Activated CD4-positive, alpha-beta T cell treated with anti-CD3 and anti-CD28 coated beads, Interleukin-2, amount 10 ng/mL, durations not matched to agents 7 days and 5 days (primary cell): ENCODE measurements at regions of chr12 and their contacts with region 1.

Region 1: GRCh38 chr12:49018261-49019119 is at the start of gene PRKAG1:
- DNase-seq: peak; percentile 97
- H3K4me3 Mint-ChIP-seq: peak within 1 kb of the TSS; percentile 95
- H3K27ac Mint-ChIP-seq: peak within 1 kb of the TSS; percentile 99
- H3K4me1 Mint-ChIP-seq: peaks cover 43% of the 10 kb centered on the region
- H3K27me3 Mint-ChIP-seq: no peaks in the 10 kb centered on the region
- total RNA-seq, gene PRKAG1: 62.5 to 65.5 TPM

Region 2: DNA sequence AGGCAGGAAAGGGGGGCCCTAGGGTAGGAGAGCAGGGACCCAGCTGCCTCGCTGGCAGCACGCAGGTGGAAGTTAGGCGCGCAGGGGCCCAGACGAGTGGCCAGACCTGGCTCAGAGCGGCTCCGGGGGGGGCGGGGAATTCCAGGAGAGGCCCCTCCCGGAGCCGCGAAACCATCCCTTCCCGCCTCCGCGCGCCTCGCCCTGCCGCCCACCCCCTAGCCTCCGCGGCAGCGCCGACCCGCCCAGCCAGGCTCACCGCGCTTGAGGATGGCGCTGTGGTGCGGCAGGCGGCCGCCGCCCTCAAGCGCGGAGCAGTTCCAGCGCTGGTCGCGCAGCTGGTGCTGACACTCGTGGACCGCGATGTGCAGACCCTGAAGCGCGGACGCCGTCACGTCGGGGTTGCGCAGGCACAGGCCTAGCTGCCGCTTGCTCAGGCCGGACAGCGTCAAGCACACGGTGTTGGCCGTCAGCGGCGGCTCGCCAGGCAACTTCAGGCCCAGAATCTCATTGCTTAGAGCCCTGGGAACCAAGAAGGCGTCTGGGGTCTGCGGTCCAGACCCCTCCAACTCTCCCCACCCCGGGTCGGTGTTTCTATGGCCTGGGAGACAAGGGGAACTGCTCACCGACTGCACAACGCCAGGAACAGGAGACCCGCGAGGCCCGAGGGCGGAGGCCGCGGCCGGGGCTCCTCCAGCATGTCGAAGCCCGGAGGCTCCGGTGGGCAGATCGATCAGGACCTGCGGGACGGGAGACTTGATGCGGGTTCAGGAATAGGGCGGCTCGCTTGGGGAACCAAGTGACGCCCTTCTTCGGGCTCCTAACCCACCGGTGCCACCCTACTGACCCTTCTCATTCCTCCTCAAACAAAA is 48.4 kb before region 1 on chr12:
- CTCF ChIA-PET with region 1: no interaction called
- POLR2A ChIA-PET with region 1: no interaction called
- DNase-seq: no peak
- H3K4me3 Mint-ChIP-seq: no peak overlapping the region
- H3K27ac Mint-ChIP-seq: no peak overlapping the region
- H3K4me1 Mint-ChIP-seq: peaks cover 16% of the 10 kb centered on the region
- H3K27me3 Mint-ChIP-seq: peaks cover 75% of the 10 kb centered on the region

Region 3: DNA sequence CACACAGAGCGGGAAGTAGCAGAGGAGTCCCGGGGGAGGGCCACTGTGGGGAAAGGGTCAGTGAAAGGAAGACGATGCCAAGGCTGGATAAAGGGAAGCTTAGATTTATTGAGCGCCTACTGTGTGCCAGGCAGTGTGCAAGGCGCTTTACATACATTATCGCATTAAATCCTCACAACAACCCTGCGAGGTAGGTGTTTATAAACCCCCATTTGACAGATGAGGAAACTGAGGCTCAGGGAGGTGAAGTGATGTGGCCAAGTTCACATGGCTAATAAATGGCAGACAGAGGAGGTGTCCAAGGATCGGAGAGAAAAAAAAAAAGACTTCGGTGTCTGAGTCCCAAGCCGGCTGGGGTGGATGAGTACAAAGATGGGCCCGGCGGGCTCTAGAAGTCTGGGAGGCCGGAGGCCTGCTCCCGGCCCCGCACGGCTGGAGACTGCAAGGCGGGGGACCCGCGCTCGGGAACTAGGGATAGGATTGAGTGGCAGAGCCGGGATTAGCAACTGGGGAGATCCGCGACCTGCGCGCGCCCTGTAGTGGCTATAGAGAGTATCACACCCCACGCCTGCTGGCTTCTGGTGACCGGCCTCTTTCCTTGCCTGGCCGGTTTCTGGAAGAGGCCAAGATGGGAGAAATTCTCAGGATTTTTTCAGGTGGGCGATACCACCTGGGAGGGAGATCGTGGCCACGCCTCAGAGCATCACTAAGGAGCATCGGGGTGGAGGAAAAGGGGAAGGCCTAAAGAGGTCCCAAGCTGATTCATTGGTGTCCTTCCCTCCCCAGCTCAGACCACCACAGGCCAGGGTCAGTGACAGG is 23.2 kb before region 1 on chr12:
- CTCF ChIA-PET with region 1: interaction called, 36 read pairs
- POLR2A ChIA-PET with region 1: no interaction called
- DNase-seq: peak; percentile 52
- H3K4me3 Mint-ChIP-seq: no peak overlapping the region
- H3K27ac Mint-ChIP-seq: no peak overlapping the region
- H3K4me1 Mint-ChIP-seq: peaks cover 32% of the 10 kb centered on the region
- H3K27me3 Mint-ChIP-seq: peaks cover 66% of the 10 kb centered on the region

Region 4: GRCh38 chr12:49030714-49031552 is 12.4 kb after region 1 on chr12:
- CTCF ChIA-PET with region 1: interaction called, 11 read pairs
- POLR2A ChIA-PET with region 1: no interaction called
- DNase-seq: no peak
- H3K4me3 Mint-ChIP-seq: no peak overlapping the region
- H3K27ac Mint-ChIP-seq: no peak overlapping the region
- H3K4me1 Mint-ChIP-seq: peaks cover 3% of the 10 kb centered on the region
- H3K27me3 Mint-ChIP-seq: no peaks in the 10 kb centered on the region

Region 5: GRCh38 chr12:49043856-49044258 is 25.4 kb after region 1 on chr12:
- CTCF ChIA-PET with region 1: interaction called, 10 read pairs
- POLR2A ChIA-PET with region 1: no interaction called
- DNase-seq: peak; percentile 85
- H3K4me3 Mint-ChIP-seq: no peak overlapping the region
- H3K27ac Mint-ChIP-seq: no peak overlapping the region
- H3K4me1 Mint-ChIP-seq: peaks cover 3% of the 10 kb centered on the region
- H3K27me3 Mint-ChIP-seq: no peaks in the 10 kb centered on the region

Region 6: DNA sequence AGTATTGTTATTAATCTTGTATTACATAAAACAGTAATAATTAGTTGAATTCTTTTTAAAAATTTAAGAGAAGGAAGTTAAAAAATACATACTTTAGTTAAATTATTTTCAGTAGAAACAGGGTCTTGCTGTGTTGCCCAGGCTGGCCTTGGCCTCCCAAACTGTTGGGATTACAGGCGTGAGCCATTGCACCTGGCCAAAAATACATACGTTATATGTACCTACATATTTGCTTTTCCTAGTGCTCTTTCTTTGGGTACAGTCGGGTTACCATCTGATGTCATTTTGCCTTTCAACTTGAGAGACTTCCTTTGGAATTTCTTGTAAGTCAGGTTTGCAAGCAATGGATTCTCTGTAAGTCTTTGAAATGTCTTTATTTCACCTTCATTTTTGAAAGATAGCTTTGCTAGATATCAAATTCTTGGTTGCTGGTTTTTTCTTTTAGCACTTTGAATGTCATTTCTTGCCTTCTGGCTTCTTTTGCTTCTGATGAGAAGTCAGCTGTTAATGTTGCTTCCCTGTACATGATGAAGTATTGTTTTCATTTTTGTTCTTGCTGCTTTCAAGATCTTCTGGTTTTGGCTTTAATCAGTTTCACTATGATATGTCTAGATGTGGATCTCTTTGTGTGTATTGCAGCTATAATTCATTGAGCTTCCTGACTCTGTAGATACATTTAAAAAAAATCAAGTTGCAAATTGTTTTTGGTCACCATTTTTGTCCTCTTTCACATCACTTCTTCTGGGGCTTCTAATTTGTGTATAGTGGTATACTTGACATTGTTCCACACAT is 433.2 kb after region 1 on chr12:
- CTCF ChIA-PET with region 1: no interaction called
- POLR2A ChIA-PET with region 1: no interaction called
- DNase-seq: no peak
- H3K4me3 Mint-ChIP-seq: no peak overlapping the region
- H3K27ac Mint-ChIP-seq: peak overlapping the region; percentile 73
- H3K4me1 Mint-ChIP-seq: peaks cover 13% of the 10 kb centered on the region
- H3K27me3 Mint-ChIP-seq: no peaks in the 10 kb centered on the region